Dendritic cell treated with granulocyte-macrophage colony-stimulating factor and Interleukin-4, amounts not matched to agents 40 ng/mL and 50 ng/mL, for 4 days (primary cell): ENCODE measurements at regions of chr1 and their contacts with region 1.

Region 1: GRCh38 chr1:210143465-210144062 is 89.0 kb upstream of the SERTAD4 start:
- H3K4me3 Mint-ChIP-seq: no peak overlapping the region
- H3K27ac Mint-ChIP-seq: no peak overlapping the region
- H3K4me1 Mint-ChIP-seq: no peaks in the 10 kb centered on the region
- H3K27me3 Mint-ChIP-seq: no peaks in the 10 kb centered on the region

Region 2: DNA sequence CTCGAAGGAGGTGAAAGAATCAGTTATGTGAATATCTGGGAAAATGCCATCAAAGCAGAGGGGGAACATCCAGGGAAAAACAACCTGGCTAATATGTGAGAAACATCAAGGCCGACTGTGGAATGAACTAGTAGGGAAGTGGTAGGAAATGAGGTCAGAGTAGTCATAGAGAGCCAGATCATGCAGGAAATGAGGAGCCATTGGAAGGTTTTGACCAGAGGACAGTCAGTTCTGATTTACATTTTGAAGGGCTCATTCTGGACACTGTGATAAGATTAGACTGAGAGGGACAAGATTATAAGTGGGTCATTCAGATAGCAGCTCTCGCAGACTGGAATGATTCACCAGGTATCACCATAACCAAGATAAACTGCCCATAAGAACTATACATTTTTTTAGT is 141.8 kb before region 1 on chr1:
- intact Hi-C with region 1: no loop called
- H3K4me3 Mint-ChIP-seq: no peak overlapping the region
- H3K27ac Mint-ChIP-seq: no peak overlapping the region
- H3K4me1 Mint-ChIP-seq: no peaks in the 10 kb centered on the region
- H3K27me3 Mint-ChIP-seq: peaks cover 1% of the 10 kb centered on the region

Region 3: DNA sequence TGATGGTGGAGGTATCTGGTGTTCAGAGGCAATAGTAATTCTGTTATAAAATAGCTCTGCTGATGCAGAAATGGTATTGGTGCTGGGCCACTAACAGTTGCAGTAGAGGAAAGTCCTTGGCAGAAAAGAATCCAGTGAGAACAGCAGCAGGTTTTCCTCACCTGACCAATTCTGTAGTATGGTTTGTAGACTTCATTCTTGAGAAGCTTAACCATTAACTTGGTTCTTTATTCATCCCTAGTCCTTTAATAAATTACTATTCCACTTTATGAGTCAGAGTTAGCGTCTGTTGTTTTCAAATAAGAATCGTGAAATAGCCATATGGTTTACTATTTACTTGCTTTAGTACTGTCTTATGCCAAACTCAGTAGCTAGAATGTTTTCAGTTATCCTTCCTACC is 39.5 kb before region 1 on chr1:
- intact Hi-C with region 1: no loop called
- H3K4me3 Mint-ChIP-seq: no peak overlapping the region
- H3K27ac Mint-ChIP-seq: no peak overlapping the region
- H3K4me1 Mint-ChIP-seq: no peaks in the 10 kb centered on the region
- H3K27me3 Mint-ChIP-seq: no peaks in the 10 kb centered on the region

Region 4: GRCh38 chr1:210201671-210202070 is 58.1 kb after region 1 on chr1:
- intact Hi-C with region 1: no loop called
- H3K4me3 Mint-ChIP-seq: no peak overlapping the region
- H3K27ac Mint-ChIP-seq: no peak overlapping the region
- H3K4me1 Mint-ChIP-seq: no peaks in the 10 kb centered on the region
- H3K27me3 Mint-ChIP-seq: no peaks in the 10 kb centered on the region

Region 5: GRCh38 chr1:210400043-210400840 is 256.7 kb after region 1 on chr1:
- intact Hi-C with region 1: loop called (anchors 1 kb)
- H3K4me3 Mint-ChIP-seq: no peak overlapping the region
- H3K27ac Mint-ChIP-seq: no peak overlapping the region
- H3K4me1 Mint-ChIP-seq: no peaks in the 10 kb centered on the region
- H3K27me3 Mint-ChIP-seq: no peaks in the 10 kb centered on the region